Natural killer cell (primary cell): ENCODE measurements at regions of chr6 and their contacts with region 1.

Region 1: GRCh38 chr6:105402939-105403935 is at the start of gene PREP:
- DNase-seq: peak; percentile 80 to 88
- ATAC-seq: peak; percentile 92 to 96 (median 93)
- H3K4me3 ChIP-seq: peak within 1 kb of the TSS; percentile 95
- H3K4me3 Mint-ChIP-seq: peak within 1 kb of the TSS; percentile 94
- H3K27ac ChIP-seq: peak within 1 kb of the TSS; percentile 51
- H3K27ac Mint-ChIP-seq: peak within 1 kb of the TSS; percentile 69 to 83
- H3K4me1 ChIP-seq: peaks cover 29% of the 10 kb centered on the region
- H3K4me1 Mint-ChIP-seq: peaks cover 44 to 53% of the 10 kb centered on the region in 2 donors
- H3K27me3 ChIP-seq: peaks cover 2% of the 10 kb centered on the region
- H3K27me3 Mint-ChIP-seq: peaks cover 0 to 5% of the 10 kb centered on the region in 2 donors
- CTCF ChIP-seq: peak; percentile 79
- total RNA-seq, gene PREP: 30.0 to 42.9 (median 37.1) TPM

Region 2: DNA sequence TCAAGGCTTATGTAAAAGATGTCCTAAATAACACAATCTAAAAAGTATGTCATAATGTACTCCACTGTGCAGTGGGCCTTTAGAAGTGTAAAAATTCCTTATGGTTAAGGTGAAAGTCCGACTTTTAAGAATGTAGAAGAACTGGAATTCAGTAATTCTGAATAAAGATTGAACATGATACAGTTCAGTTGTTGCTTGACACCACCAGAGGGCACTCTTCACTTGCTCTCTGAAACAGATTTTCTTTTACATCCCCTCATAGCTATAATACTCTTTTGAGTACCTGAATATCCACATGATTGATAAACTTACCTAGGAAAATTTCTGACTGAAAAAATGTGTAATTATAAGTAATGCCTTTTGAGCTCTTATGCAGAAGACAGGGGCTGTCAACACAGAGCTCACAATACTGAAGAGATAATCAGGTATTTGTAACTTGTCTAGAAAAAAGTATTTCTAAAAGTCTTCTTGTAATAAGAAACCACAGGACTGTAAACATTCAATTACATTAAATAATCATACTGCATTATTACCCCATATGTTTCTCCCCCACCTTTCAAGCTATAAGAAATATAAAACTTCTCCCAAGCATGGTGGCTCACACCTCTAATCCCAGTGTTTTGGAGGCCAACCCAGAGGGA is 315.5 kb before region 1 on chr6:
- intact Hi-C with region 1: loop called (anchors 1 kb)
- DNase-seq: peak in 1 of 2 donors; percentile 76
- ATAC-seq: peak; percentile 63 to 74 (median 71)
- H3K4me3 ChIP-seq: no peak overlapping the region
- H3K4me3 Mint-ChIP-seq: no peak overlapping the region
- H3K27ac ChIP-seq: no peak overlapping the region
- H3K27ac Mint-ChIP-seq: no peak overlapping the region
- H3K4me1 ChIP-seq: no peaks in the 10 kb centered on the region
- H3K4me1 Mint-ChIP-seq: no peaks in the 10 kb centered on the region
- H3K27me3 ChIP-seq: no peaks in the 10 kb centered on the region
- H3K27me3 Mint-ChIP-seq: peaks cover 2 to 12% of the 10 kb centered on the region in 2 donors
- CTCF ChIP-seq: peak; percentile 87

Region 3: GRCh38 chr6:105317607-105318533 is 85.4 kb before region 1 on chr6:
- intact Hi-C with region 1: loop called (anchors 5 kb)
- DNase-seq: peak in 1 of 2 donors; percentile 29
- ATAC-seq: no peak
- H3K4me3 ChIP-seq: no peak overlapping the region
- H3K4me3 Mint-ChIP-seq: no peak overlapping the region
- H3K27ac ChIP-seq: no peak overlapping the region
- H3K27ac Mint-ChIP-seq: no peak overlapping the region
- H3K4me1 ChIP-seq: no peaks in the 10 kb centered on the region
- H3K4me1 Mint-ChIP-seq: peaks cover 5 to 7% of the 10 kb centered on the region in 2 donors
- H3K27me3 ChIP-seq: no peaks in the 10 kb centered on the region
- H3K27me3 Mint-ChIP-seq: no peaks in the 10 kb centered on the region
- CTCF ChIP-seq: peak; percentile 14